HCT116 (cell line): ENCODE measurements at regions of chr11 and their contacts with region 1.

Region 1: GRCh38 chr11:118592616-118593367 is 14.6 kb upstream of the PHLDB1 start:
- DNase-seq: no peak
- ATAC-seq: no peak
- H3K4me3 ChIP-seq: no peak overlapping the region
- H3K27ac ChIP-seq: no peak overlapping the region
- H3K4me1 ChIP-seq: no peaks in the 10 kb centered on the region
- H3K27me3 ChIP-seq: no peaks in the 10 kb centered on the region
- CTCF ChIP-seq: no peak
- POLR2A ChIP-seq: no peak
- RAD21 ChIP-seq: no peak

Region 2: GRCh38 chr11:118605116-118605867 is 12.5 kb after region 1 on chr11:
- CTCF ChIA-PET with region 1: interaction called, 11 read pairs
- POLR2A ChIA-PET with region 1: interaction called, 4 read pairs
- RAD21 ChIA-PET with region 1: no interaction called
- intact Hi-C with region 1: no loop called
- DNase-seq: no peak
- ATAC-seq: no peak
- H3K4me3 ChIP-seq: no peak overlapping the region
- H3K27ac ChIP-seq: no peak overlapping the region
- H3K4me1 ChIP-seq: peaks cover 7 to 24% of the 10 kb centered on the region in 2 experiments; a peak in 3 of 4 replicates
- H3K27me3 ChIP-seq: no peaks in the 10 kb centered on the region
- CTCF ChIP-seq: no peak
- POLR2A ChIP-seq: no peak
- RAD21 ChIP-seq: no peak

Region 3: GRCh38 chr11:118659314-118659952 is 66.6 kb after region 1 on chr11:
- CTCF ChIA-PET with region 1: interaction called, 8 read pairs
- POLR2A ChIA-PET with region 1: no interaction called
- RAD21 ChIA-PET with region 1: no interaction called
- intact Hi-C with region 1: loop called (anchors 1 kb)
- DNase-seq: peak; percentile 65
- ATAC-seq: peak; percentile 92
- H3K4me3 ChIP-seq: no peak overlapping the region
- H3K27ac ChIP-seq: no peak overlapping the region; the same call in 1 of the 2 replicates
- H3K4me1 ChIP-seq: peaks cover 7 to 16% of the 10 kb centered on the region in 2 experiments; a peak in 3 of 4 replicates
- H3K27me3 ChIP-seq: no peaks in the 10 kb centered on the region
- CTCF ChIP-seq: peak; percentile 97 to 99 (median 98)
- POLR2A ChIP-seq: no peak
- RAD21 ChIP-seq: peak; percentile 96

Region 4: GRCh38 chr11:118715245-118715831 is 122.5 kb after region 1 on chr11:
- CTCF ChIA-PET with region 1: no interaction called
- POLR2A ChIA-PET with region 1: no interaction called
- RAD21 ChIA-PET with region 1: no interaction called
- intact Hi-C with region 1: no loop called
- DNase-seq: no peak
- ATAC-seq: no peak
- H3K4me3 ChIP-seq: no peak overlapping the region
- H3K27ac ChIP-seq: no peak overlapping the region
- H3K4me1 ChIP-seq: peaks cover 3 to 6% of the 10 kb centered on the region in 2 experiments; a peak in 2 of 4 replicates
- H3K27me3 ChIP-seq: no peaks in the 10 kb centered on the region
- CTCF ChIP-seq: no peak
- POLR2A ChIP-seq: no peak
- RAD21 ChIP-seq: no peak

Region 5: DNA sequence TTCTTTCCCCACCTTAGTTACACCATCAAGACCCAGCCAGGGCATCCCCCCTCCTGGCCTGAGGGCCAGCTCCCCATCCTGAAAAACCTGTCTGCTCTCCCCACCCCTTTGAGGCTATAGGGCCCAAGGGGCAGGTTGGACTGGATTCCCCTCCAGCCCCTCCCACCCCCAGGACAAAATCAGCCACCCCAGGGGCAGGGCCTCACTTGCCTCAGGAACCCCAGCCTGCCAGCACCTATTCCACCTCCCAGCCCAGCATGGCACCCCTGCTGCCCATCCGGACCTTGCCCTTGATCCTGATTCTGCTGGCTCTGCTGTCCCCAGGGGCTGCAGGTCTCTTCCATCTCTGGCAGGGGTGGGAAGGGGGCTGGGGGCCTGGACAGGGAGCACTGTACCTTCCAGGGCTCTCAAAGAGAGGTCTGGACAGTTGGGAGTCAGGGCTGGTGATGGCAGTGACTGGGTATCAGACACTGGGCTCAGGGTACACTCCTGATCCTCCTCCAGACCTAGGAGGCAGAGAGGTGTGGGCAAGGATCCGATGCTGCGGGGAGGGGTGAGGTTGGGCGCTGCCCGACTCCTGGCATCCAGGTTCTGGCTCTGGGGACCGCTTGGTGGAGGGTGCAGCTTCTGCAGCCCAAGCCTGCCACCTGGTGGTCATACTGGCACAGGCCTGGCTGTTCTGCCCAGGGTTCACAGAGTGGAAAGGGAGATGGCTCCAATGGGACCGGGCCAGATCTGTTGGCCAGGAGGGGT is 363.5 kb after region 1 on chr11 and contains the start of gene UPK2:
- CTCF ChIA-PET with region 1: no interaction called
- POLR2A ChIA-PET with region 1: no interaction called
- RAD21 ChIA-PET with region 1: no interaction called
- intact Hi-C with region 1: loop called (anchors 5 kb)
- DNase-seq: peak; percentile 78
- ATAC-seq: peak; percentile 99
- H3K4me3 ChIP-seq: no peak within 1 kb of the TSS
- H3K27ac ChIP-seq: no peak within 1 kb of the TSS
- H3K4me1 ChIP-seq: peaks cover 0 to 18% of the 10 kb centered on the region in 2 experiments; a peak in 2 of 4 replicates
- H3K27me3 ChIP-seq: no peaks in the 10 kb centered on the region
- CTCF ChIP-seq: peak; percentile 96 to 97 (median 96)
- POLR2A ChIP-seq: no peak
- RAD21 ChIP-seq: peak; percentile 100
- total RNA-seq, gene UPK2: 0.42 TPM